ENCODE measurements at regions of chr11 and their contacts with region 1.

Region 1: DNA sequence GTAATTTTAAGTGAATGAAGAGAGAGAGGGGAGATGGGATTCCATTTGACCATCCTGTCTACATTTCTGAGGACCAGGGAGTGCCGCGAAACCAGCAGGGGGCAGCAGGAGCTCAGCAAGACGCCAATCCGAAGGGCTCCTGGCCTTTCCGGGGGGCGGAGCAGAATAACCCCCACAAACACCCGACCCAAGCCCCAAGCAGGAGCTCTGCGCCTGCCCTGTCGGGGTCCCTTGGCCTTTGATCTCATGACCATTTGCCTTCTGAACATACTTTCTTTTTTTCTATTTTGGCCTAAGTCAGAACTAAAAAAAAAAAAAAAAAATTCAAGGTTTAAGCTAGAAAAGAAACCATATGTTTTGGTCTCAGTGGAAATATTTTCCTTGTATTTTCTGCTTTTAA is 21.9 kb upstream of the SCN2B start:
- DNase-seq: peak; percentile 85
- H3K4me3 Mint-ChIP-seq: no peak overlapping the region
- H3K27ac Mint-ChIP-seq: peak overlapping the region; percentile 63
- H3K4me1 Mint-ChIP-seq: peaks cover 15% of the 10 kb centered on the region
- H3K27me3 Mint-ChIP-seq: no peaks in the 10 kb centered on the region

Region 2: GRCh38 chr11:118171269-118172062 is 26.9 kb before region 1 on chr11:
- CTCF ChIA-PET with region 1: interaction called, 10 read pairs
- POLR2A ChIA-PET with region 1: no interaction called
- DNase-seq: peak; percentile 73
- H3K4me3 Mint-ChIP-seq: no peak overlapping the region
- H3K27ac Mint-ChIP-seq: no peak overlapping the region
- H3K4me1 Mint-ChIP-seq: peaks cover 2% of the 10 kb centered on the region
- H3K27me3 Mint-ChIP-seq: peaks cover 28% of the 10 kb centered on the region

Region 3: DNA sequence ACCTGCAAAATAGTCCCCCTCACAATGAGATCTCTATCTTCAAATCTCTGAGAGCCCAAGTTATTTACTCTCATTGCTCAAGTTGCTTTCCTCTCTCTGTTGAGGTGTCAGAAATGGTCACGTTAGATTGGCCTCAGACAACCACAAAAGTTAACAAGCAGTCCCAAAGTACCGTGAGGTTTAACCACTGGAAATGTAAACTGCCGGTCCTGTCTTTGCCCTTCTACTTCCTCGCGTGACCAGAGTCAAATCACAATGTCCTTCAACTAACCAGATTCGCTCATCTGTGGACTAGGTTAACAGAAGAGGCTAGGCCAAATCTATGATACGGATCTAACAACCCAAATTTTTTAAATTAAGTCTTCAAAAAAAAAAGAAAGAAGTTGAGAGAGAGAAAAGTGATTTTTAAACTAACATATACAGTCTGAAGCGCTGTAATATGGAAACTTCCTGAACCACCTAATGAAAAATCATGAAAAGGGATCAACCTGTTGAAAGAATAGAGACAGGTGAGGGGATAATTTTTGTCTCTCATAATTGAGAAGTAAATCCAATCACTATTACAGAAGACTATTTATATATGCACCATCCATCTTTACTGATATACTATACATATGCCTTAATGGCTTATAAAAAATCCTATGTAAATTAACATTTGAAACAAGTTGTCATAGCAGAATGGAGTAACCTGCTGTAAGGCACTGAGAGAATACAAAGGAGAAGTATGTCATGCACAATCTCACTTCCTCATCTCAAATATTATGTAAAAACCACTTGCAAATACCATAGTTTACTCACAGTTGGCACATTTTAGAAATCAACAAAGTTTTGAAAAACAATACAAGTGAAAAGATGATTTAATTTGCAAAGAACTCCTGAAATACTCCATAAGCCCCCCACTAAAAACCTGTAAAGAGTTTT is 29.8 kb after region 1 on chr11:
- CTCF ChIA-PET with region 1: interaction called, 42 read pairs
- POLR2A ChIA-PET with region 1: interaction called, 249 read pairs
- DNase-seq: peak; percentile 63
- H3K4me3 Mint-ChIP-seq: peak overlapping the region; percentile 43
- H3K27ac Mint-ChIP-seq: no peak overlapping the region
- H3K4me1 Mint-ChIP-seq: peaks cover 31% of the 10 kb centered on the region
- H3K27me3 Mint-ChIP-seq: no peaks in the 10 kb centered on the region

Region 4: DNA sequence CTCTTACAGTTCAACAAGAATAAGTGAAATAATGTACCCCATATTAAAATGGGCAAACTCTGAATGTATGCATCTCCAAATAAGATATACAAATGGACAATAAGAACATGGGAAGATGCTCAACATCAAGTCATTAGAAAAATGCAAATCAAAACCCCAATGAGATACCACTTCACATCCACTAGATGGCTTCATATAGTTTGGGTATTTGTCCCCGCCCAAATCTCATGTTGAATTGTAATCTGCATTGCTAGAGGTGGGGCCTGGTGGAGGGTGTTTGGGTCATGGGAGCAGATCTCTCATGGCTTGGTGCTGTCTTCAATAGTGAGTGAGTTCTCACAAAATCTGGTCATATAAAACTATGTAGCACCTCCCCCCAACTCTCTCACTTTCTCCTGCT is 60.0 kb after region 1 on chr11:
- CTCF ChIA-PET with region 1: interaction called, 34 read pairs
- POLR2A ChIA-PET with region 1: interaction called, 3 read pairs
- DNase-seq: no peak
- H3K4me3 Mint-ChIP-seq: no peak overlapping the region
- H3K27ac Mint-ChIP-seq: no peak overlapping the region
- H3K4me1 Mint-ChIP-seq: peaks cover 23% of the 10 kb centered on the region
- H3K27me3 Mint-ChIP-seq: no peaks in the 10 kb centered on the region

Region 5: DNA sequence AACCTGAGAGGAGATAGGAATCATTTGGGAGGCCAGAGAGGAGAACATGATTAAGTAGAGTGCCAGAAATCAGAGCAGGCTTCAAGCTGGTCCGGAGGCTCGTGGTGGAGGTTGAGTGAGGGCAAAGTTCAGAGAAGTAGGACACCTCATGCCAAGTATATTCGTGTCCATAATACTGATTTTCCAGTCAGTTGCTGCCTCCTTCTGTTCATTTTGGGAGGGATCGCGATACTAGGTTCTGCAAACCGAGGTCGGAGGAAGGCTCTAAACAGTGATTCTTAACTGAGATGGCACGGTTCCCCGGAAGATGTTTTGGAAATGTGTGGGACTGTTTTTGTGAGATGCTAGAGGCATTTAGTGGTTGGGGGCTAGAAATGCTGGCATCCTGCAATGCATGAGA is 92.6 kb after region 1 on chr11:
- CTCF ChIA-PET with region 1: interaction called, 62 read pairs
- POLR2A ChIA-PET with region 1: interaction called, 7 read pairs
- DNase-seq: peak; percentile 54
- H3K4me3 Mint-ChIP-seq: no peak overlapping the region
- H3K27ac Mint-ChIP-seq: no peak overlapping the region
- H3K4me1 Mint-ChIP-seq: peaks cover 22% of the 10 kb centered on the region
- H3K27me3 Mint-ChIP-seq: peaks cover 3% of the 10 kb centered on the region

Region 6: GRCh38 chr11:118338637-118339061 is 140.3 kb after region 1 on chr11:
- CTCF ChIA-PET with region 1: interaction called, 14 read pairs
- POLR2A ChIA-PET with region 1: interaction called, 13 read pairs
- DNase-seq: peak; percentile 93
- H3K4me3 Mint-ChIP-seq: peak overlapping the region; percentile 89
- H3K27ac Mint-ChIP-seq: peak overlapping the region; percentile 99
- H3K4me1 Mint-ChIP-seq: peaks cover 58% of the 10 kb centered on the region
- H3K27me3 Mint-ChIP-seq: no peaks in the 10 kb centered on the region

Region 7: GRCh38 chr11:118401151-118401878 is 202.9 kb after region 1 on chr11 and contains the start of gene ATP5MG:
- CTCF ChIA-PET with region 1: interaction called, 11 read pairs
- POLR2A ChIA-PET with region 1: no interaction called
- DNase-seq: peak; percentile 92
- H3K4me3 Mint-ChIP-seq: peak within 1 kb of the TSS; percentile 85
- H3K27ac Mint-ChIP-seq: peak within 1 kb of the TSS; percentile 97
- H3K4me1 Mint-ChIP-seq: peaks cover 74% of the 10 kb centered on the region
- H3K27me3 Mint-ChIP-seq: no peaks in the 10 kb centered on the region
- total RNA-seq, gene ATP5MG: 251 to 260 TPM

Measured in activated CD4-positive, alpha-beta memory T cell treated with anti-CD3 and anti-CD28 coated beads, Interleukin-2, amount 10 ng/mL, durations not matched to agents 7 days and 5 days (primary cell).